HEK293 (cell line): ENCODE measurements at regions of chr20 and their contacts with region 1.

Region 1: GRCh38 chr20:44187051-44187762 is at the start of gene JPH2:
- H3K4me3 ChIP-seq: peak within 1 kb of the TSS; percentile 40
- H3K27ac ChIP-seq: no peak within 1 kb of the TSS
- H3K4me1 ChIP-seq: peaks cover 6% of the 10 kb centered on the region
- CTCF ChIP-seq: no peak

Region 2: DNA sequence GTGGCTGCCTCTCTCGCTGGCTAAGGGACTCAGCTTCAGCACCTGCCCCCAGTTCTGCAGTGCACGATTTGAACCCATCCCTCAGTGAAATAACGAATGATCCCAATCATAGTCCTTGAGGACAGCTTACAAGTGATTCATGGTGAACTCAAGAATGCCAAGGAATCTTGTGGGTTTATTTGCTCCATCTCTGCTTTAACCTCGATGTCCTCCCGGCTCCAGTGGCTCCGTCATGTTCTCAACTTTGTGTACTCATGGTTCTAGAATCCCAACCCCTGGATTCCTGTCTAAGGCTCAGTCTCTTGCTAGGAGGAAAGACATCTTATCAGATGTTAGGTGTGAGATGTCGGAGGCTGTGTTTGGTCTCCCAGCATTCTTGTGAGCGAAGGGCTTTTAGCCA is 431.4 kb before region 1 on chr20:
- CTCF ChIA-PET with region 1: no interaction called
- POLR2A ChIA-PET with region 1: no interaction called
- H3K4me3 ChIP-seq: no peak overlapping the region
- H3K27ac ChIP-seq: no peak overlapping the region
- H3K4me1 ChIP-seq: no peaks in the 10 kb centered on the region
- CTCF ChIP-seq: no peak

Region 3: DNA sequence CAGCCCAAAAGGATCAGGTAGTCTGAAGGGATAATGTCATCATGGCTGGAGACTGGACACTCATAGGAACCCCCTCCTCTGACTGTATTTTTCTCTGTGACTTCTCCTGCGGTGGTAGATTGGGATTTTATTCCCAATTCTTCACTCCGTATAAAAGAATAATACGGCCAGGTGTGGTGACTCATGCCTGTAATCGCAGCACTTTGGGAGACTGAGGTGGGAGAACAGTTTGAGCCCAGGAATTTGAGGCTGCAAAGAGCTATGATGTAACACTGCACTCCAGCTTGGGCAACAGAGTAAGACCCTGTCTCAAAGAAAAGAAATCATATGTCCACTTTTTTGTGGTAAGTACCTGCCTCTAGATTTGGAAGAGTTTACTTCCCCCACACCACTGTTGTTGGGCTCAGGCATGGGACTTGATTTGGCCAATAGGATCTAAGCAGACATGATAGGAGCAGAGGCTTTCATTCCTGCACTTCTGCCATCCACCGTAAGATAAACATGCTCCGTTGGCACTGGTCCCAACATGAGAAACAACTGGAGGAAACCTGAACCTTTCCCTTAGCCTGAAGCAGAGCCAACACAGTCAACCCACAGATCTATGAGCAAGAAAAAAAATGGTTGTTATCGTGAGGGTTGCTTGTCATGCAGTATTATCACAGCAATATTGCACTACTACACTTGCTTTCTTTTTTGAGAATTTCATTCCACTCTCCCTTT is 82.2 kb before region 1 on chr20:
- CTCF ChIA-PET with region 1: interaction called, 10 read pairs
- POLR2A ChIA-PET with region 1: no interaction called
- H3K4me3 ChIP-seq: no peak overlapping the region
- H3K27ac ChIP-seq: no peak overlapping the region
- H3K4me1 ChIP-seq: peaks cover 11% of the 10 kb centered on the region
- CTCF ChIP-seq: no peak

Region 4: GRCh38 chr20:44137210-44137801 is 49.9 kb before region 1 on chr20:
- CTCF ChIA-PET with region 1: interaction called, 12 read pairs
- POLR2A ChIA-PET with region 1: interaction called, 6 read pairs
- H3K4me3 ChIP-seq: no peak overlapping the region
- H3K27ac ChIP-seq: no peak overlapping the region
- H3K4me1 ChIP-seq: no peaks in the 10 kb centered on the region
- CTCF ChIP-seq: no peak

Region 5: GRCh38 chr20:44203161-44203560 is 16.0 kb after region 1 on chr20:
- CTCF ChIA-PET with region 1: interaction called, 16 read pairs
- POLR2A ChIA-PET with region 1: no interaction called
- H3K4me3 ChIP-seq: no peak overlapping the region
- H3K27ac ChIP-seq: no peak overlapping the region
- H3K4me1 ChIP-seq: peaks cover 17% of the 10 kb centered on the region
- CTCF ChIP-seq: no peak

Region 6: GRCh38 chr20:44210422-44211176 is 23.4 kb after region 1 on chr20 and contains the start of gene OSER1:
- CTCF ChIA-PET with region 1: interaction called, 11 read pairs
- POLR2A ChIA-PET with region 1: no interaction called
- H3K4me3 ChIP-seq: peak within 1 kb of the TSS; percentile 80
- H3K27ac ChIP-seq: peak within 1 kb of the TSS; percentile 79
- H3K4me1 ChIP-seq: peaks cover 22% of the 10 kb centered on the region
- CTCF ChIP-seq: no peak